Cardiac septum (tissue), 1 donor: ENCODE measurements at regions of chr17 and their contacts with region 1.

Region 1: GRCh38 chr17:8294814-8295316 is 335 bp downstream of the SLC25A35 start:
- DNase-seq: no peak

Region 2: GRCh38 chr17:8204761-8205555 is 89.9 kb before region 1 on chr17:
- intact Hi-C with region 1: no loop called
- DNase-seq: no peak

Region 3: DNA sequence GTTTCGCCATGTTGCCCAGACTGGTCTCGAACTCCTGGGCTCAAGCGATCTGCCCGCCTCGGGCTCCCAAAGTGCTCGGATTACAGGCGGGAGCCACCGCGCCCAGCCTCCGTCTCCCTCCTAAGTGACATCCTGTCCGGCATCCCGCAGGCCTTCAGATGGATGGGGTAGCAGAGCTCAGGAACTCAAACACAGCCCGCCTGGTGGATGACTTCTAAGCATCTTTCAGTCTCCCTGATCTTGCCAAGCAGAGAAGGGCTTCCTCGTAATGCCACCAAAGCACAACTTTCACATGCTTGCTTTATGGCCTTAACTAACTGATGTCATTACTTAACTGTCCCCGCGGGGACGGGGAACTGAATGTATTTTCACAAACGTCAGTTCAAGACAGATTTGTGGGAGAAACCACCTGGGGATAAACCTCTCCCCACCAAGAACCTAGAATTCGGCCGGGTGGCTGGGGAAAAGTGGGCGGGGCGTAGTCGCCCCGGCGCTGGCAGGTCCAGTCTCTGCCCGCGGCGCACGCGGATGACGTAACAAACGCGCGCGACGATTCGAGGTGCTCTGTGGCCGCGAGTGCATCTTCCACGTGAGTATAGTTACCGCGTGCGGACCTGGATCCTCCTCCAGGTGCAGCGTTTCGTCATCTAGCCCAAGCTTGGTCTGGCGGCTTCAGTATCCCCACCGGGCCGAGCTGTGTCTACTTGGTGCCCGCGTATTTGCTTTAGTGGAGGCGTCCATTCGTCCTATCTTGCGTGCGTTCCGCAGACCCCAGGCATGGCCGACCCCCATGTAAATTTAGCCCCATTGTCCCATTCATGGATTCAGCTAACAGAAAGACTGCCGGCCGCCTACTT is 45.9 kb before region 1 on chr17 and contains the start of gene PFAS:
- intact Hi-C with region 1: loop called (anchors 2 kb)
- DNase-seq: peak; percentile 98
- total RNA-seq, gene PFAS: 11.2 TPM